ENCODE measurements at regions of chr3 and their contacts with region 1.

Region 1: DNA sequence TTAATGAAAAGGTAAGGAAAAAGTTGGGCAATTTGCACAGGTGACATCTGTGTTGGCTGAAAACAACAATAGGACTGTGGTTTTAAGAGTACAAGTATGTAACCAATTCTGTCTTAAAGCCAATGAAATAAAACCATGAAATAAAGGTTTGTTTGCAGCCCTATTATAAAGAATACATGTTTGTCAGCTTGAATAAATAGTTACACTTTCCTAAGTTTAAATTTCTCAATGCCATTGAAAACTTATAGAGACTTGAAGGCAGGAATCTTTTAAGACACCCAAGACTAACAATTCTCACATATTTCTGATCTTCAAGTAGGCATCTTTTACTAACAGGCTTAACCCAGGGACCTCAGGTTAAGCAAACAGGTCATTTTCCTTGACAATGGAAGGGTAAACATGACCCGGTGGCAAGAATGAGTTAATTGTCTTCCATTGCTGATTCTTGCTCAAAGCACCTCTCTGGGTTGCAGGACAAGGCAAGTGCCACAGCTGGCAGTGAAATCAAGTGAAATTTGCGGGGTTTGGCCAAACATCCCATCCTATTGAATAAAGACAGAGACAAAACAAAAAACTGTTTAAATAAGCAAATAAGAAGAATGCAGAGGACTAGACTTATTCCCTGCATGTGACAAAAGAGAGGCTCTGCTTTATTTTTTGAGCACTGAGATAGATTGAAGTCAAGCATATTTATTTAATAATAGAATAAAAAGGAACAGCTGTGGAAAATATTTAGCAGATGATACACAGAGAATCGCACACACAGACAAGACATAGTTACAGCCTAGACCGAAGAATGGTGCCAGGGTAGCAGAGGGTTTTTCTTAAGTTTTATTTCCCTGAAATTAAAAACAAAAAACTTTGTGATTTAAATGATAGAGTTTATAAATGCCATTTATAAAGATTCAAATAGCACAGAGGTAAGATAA is 56.1 kb upstream of the MITF start:
- DNase-seq: no peak
- ATAC-seq: no peak
- H3K4me3 ChIP-seq: no peak overlapping the region
- H3K27ac ChIP-seq: no peak overlapping the region
- H3K4me1 ChIP-seq: no peaks in the 10 kb centered on the region
- H3K27me3 ChIP-seq: no peaks in the 10 kb centered on the region

Region 2: DNA sequence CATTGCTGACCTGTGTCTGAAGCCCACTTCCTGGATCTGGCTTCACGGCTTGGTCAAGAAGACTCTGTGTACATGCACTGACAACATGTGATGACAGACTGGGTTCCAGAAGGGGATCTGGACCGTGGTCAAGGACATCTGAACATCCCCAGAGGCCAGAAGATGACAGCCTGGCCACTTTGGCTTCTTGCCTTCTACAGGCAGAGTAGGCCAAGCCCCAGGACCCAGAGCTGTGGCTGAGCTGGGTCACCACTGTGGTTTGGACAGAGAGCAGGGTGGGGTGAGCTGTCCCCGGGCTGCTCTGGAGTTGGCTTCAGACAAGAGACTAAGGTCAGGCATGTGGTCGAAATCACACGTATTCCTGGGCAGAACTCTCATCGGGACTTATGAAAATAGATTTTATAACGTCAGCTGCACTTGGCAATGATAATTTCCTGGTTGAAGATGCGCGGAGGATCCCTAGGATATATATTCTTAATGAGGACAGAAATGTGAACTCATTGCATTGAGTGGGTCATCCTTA is 183.2 kb before region 1 on chr3:
- intact Hi-C with region 1: no loop called
- DNase-seq: peak; percentile 74 to 83 (median 83)
- ATAC-seq: peak; percentile 96 to 97
- H3K4me3 ChIP-seq: no peak overlapping the region
- H3K27ac ChIP-seq: peak overlapping the region; percentile 40
- H3K4me1 ChIP-seq: peaks cover 10% of the 10 kb centered on the region
- H3K27me3 ChIP-seq: no peaks in the 10 kb centered on the region

Region 3: GRCh38 chr3:69791919-69792399 is 108.8 kb after region 1 on chr3:
- intact Hi-C with region 1: loop called in 2 of 4 experiments (anchors 5 to 10 kb)
- DNase-seq: no peak
- ATAC-seq: peak; percentile 59 to 63
- H3K4me3 ChIP-seq: no peak overlapping the region
- H3K27ac ChIP-seq: peak overlapping the region; percentile 50
- H3K4me1 ChIP-seq: peaks cover 3% of the 10 kb centered on the region
- H3K27me3 ChIP-seq: no peaks in the 10 kb centered on the region